ENCODE measurements at regions of chr11 and their contacts with region 1.

Region 1: GRCh38 chr11:111766093-111766833 is at the start of gene PPP2R1B:
- DNase-seq: peak; percentile 88
- H3K4me3 ChIP-seq: peak within 1 kb of the TSS; percentile 78
- H3K27ac ChIP-seq: peak within 1 kb of the TSS; percentile 83
- H3K4me1 ChIP-seq: peaks cover 18% of the 10 kb centered on the region
- H3K27me3 ChIP-seq: no peaks in the 10 kb centered on the region
- total RNA-seq, gene PPP2R1B: 24.8 and 25.1 TPM in 2 replicates

Region 2: GRCh38 chr11:111586388-111586831 is 179.9 kb before region 1 on chr11:
- in situ Hi-C with region 1: loop called (anchors 5 kb)
- DNase-seq: peak; percentile 75
- H3K4me3 ChIP-seq: no peak overlapping the region
- H3K27ac ChIP-seq: peak overlapping the region; percentile 66; the same call in 1 of the 2 replicates
- H3K4me1 ChIP-seq: peaks cover 11% of the 10 kb centered on the region
- H3K27me3 ChIP-seq: no peaks in the 10 kb centered on the region

Region 3: DNA sequence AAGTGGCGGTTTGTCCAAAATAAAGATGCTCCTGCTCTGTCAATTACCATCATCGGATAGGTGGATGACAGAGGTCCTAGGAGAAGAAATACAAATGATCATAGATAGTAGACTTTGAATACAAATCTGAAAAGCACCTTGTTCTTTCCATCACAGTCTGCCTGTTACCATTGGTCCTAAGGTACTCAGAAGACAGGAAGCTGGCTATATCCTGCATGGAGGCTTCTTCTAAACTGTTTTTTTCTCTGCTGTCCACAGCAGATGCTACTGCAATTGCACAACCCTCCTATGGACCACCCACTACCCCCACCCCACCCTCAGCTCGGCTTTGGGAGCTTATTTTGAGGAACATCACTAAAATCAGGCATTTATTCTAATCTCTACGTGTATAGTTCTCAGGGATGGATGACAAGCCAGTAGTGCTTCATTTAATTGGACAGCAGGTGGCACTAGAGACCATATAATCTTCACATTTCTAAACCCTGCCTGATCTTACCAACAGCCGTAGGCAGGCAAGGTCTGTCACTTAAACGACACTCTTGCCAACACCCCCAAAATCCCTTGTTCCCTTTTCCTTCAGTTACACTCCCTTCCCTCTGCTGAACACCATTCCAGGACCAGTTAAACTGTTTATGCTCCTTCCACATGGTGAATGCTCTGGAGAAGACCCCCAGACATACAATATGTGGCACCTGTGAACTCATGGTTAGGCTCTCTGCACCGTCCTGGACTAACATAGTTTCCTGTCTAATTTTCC is 453.4 kb after region 1 on chr11:
- in situ Hi-C with region 1: no loop called
- DNase-seq: peak; percentile 76
- H3K4me3 ChIP-seq: no peak overlapping the region
- H3K27ac ChIP-seq: no peak overlapping the region
- H3K4me1 ChIP-seq: no peaks in the 10 kb centered on the region; the same call in 1 of the 2 replicates
- H3K27me3 ChIP-seq: no peaks in the 10 kb centered on the region

Measured in GM23248 (cell line).